CD8-positive, alpha-beta T cell (primary cell): ENCODE measurements at regions of chr4 and their contacts with region 1.

Region 1: DNA sequence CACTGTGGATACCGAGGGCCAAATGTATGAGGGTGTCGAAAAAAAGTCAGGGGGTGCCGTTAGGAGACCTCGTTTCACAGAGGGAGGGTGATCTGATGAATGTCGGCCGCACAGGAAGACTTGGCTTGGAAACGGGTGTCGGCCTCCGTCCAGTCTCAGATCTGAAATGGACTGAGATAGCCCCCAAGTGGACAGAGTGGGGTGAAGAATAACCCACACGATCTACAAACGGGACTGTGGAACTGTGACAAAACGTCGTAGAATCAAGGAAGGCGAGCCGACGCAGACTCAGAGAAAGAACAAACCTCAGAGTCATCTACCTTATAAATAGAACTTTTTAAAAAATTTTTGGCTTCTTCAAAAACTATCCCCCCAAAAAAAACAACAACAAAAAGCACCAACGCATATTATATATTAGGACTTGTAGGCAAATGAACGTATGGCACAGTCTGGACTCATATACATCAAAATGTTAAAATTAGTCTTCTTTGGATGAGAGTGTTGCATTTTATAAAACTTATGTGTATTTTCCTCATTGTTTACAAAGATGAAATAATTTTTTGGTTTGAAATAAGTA is 63.8 kb upstream of the IRF2 start:
- DNase-seq: peak; percentile 38 to 88 (median 65)
- ATAC-seq: peak; percentile 45
- H3K4me3 ChIP-seq: peak overlapping the region; percentile 57 to 63
- H3K4me3 Mint-ChIP-seq: peak overlapping the region; percentile 91
- H3K27ac ChIP-seq: peak overlapping the region; percentile 84 to 90
- H3K27ac Mint-ChIP-seq: peak overlapping the region; percentile 100
- H3K4me1 ChIP-seq: peaks cover 33% of the 10 kb centered on the region
- H3K4me1 Mint-ChIP-seq: peaks cover 46% of the 10 kb centered on the region
- H3K27me3 ChIP-seq: no peaks in the 10 kb centered on the region
- H3K27me3 Mint-ChIP-seq: no peaks in the 10 kb centered on the region
- CTCF ChIP-seq: peak; percentile 36

Region 2: GRCh38 chr4:184310171-184310567 is 227.9 kb before region 1 on chr4:
- CTCF ChIA-PET with region 1: no interaction called
- POLR2A ChIA-PET with region 1: no interaction called
- intact Hi-C with region 1: loop called in 1 of 2 experiments (anchors 1 kb)
- DNase-seq: peak in 6 of 9 experiments; percentile 20 to 69 (median 42)
- ATAC-seq: peak; percentile 40
- H3K4me3 ChIP-seq: peak overlapping the region in 1 of 2 experiments; percentile 6
- H3K4me3 Mint-ChIP-seq: no peak overlapping the region
- H3K27ac ChIP-seq: no peak overlapping the region
- H3K27ac Mint-ChIP-seq: peak overlapping the region; percentile 47
- H3K4me1 ChIP-seq: peaks cover 24% of the 10 kb centered on the region
- H3K4me1 Mint-ChIP-seq: peaks cover 35% of the 10 kb centered on the region
- H3K27me3 ChIP-seq: no peaks in the 10 kb centered on the region
- H3K27me3 Mint-ChIP-seq: no peaks in the 10 kb centered on the region
- CTCF ChIP-seq: no peak

Region 3: GRCh38 chr4:184733654-184734524 is 195.8 kb after region 1 on chr4 and contains the start of gene CENPU:
- CTCF ChIA-PET with region 1: no interaction called
- POLR2A ChIA-PET with region 1: no interaction called
- intact Hi-C with region 1: loop called (anchors 1 kb)
- DNase-seq: peak; percentile 87 to 97 (median 94)
- ATAC-seq: peak; percentile 95
- H3K4me3 ChIP-seq: peak within 1 kb of the TSS; percentile 74 to 79
- H3K4me3 Mint-ChIP-seq: peak within 1 kb of the TSS; percentile 87
- H3K27ac ChIP-seq: peak within 1 kb of the TSS; percentile 2 to 43
- H3K27ac Mint-ChIP-seq: peak within 1 kb of the TSS; percentile 84
- H3K4me1 ChIP-seq: peaks cover 8% of the 10 kb centered on the region
- H3K4me1 Mint-ChIP-seq: peaks cover 18% of the 10 kb centered on the region
- H3K27me3 ChIP-seq: no peaks in the 10 kb centered on the region
- H3K27me3 Mint-ChIP-seq: no peaks in the 10 kb centered on the region
- CTCF ChIP-seq: no peak
- total RNA-seq, gene CENPU: 3.4 TPM

Region 4: GRCh38 chr4:185471235-185472102 is 933.4 kb after region 1 on chr4 and contains the start of gene CCDC110:
- CTCF ChIA-PET with region 1: no interaction called
- POLR2A ChIA-PET with region 1: no interaction called
- intact Hi-C with region 1: loop called in 1 of 2 experiments (anchors 2 kb)
- DNase-seq: peak; percentile 79 to 96 (median 88)
- ATAC-seq: peak; percentile 95
- H3K4me3 ChIP-seq: peak within 1 kb of the TSS; percentile 60 to 85
- H3K4me3 Mint-ChIP-seq: peak within 1 kb of the TSS; percentile 93
- H3K27ac ChIP-seq: peak within 1 kb of the TSS; percentile 27 to 34
- H3K27ac Mint-ChIP-seq: peak within 1 kb of the TSS; percentile 67
- H3K4me1 ChIP-seq: peaks cover 13% of the 10 kb centered on the region
- H3K4me1 Mint-ChIP-seq: peaks cover 16% of the 10 kb centered on the region
- H3K27me3 ChIP-seq: no peaks in the 10 kb centered on the region
- H3K27me3 Mint-ChIP-seq: peaks cover 2% of the 10 kb centered on the region
- CTCF ChIP-seq: peak; percentile 64
- total RNA-seq, gene CCDC110: 0.57 TPM in 1 of 2 experiments, not detected in the other